Vagina (tissue), 2 donors: ENCODE measurements at regions of chr14 and their contacts with region 1.

Region 1: GRCh38 chr14:63556158-63556557 is 13.0 kb upstream of the PPP2R5E start:
- DNase-seq: no peak
- H3K4me3 ChIP-seq: no peak overlapping the region
- H3K27ac ChIP-seq: no peak overlapping the region
- H3K4me1 ChIP-seq: no peaks in the 10 kb centered on the region
- H3K27me3 ChIP-seq: no peaks in the 10 kb centered on the region
- CTCF ChIP-seq: no peak
- POLR2A ChIP-seq: no peak

Region 2: DNA sequence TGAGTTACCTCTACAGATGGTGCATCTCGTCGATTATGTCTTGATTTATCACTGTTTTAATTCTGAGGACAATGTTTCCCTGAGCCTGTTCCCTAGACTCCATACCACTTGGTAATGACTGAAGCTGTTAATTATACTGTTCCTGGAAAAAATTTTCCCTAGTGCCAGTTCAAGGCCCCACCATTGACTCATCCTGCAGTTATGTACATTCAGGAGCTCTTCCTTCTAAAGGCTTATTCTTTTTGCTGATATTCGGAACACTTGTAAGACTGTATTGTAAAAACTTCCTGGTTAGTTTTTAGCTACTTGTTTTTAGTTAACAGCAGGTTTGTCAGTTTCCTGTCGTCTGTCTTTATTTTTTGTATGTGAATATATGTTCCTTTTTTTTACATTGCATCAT is 17.4 kb after region 1 on chr14:
- intact Hi-C with region 1: no loop called
- DNase-seq: no peak
- H3K4me3 ChIP-seq: no peak overlapping the region
- H3K27ac ChIP-seq: no peak overlapping the region
- H3K4me1 ChIP-seq: no peaks in the 10 kb centered on the region
- H3K27me3 ChIP-seq: no peaks in the 10 kb centered on the region
- CTCF ChIP-seq: no peak
- POLR2A ChIP-seq: no peak

Region 3: GRCh38 chr14:63594455-63595372 is 38.6 kb after region 1 on chr14:
- intact Hi-C with region 1: loop called (anchors 2 kb)
- DNase-seq: no peak
- H3K4me3 ChIP-seq: no peak overlapping the region
- H3K27ac ChIP-seq: no peak overlapping the region
- H3K4me1 ChIP-seq: no peaks in the 10 kb centered on the region
- H3K27me3 ChIP-seq: no peaks in the 10 kb centered on the region
- CTCF ChIP-seq: no peak
- POLR2A ChIP-seq: no peak